SK-N-SH (cell line): ENCODE measurements at regions of chr7 and their contacts with region 1.

Region 1: GRCh38 chr7:44565097-44565794 is 8.5 kb downstream of the DDX56 start:
- DNase-seq: peak; percentile 80
- H3K4me3 ChIP-seq: no peak overlapping the region; a peak in 1 of 4 replicates
- H3K27ac ChIP-seq: no peak overlapping the region
- H3K4me1 ChIP-seq: peaks cover 4 to 5% of the 10 kb centered on the region in 2 experiments; a peak in 2 of 4 replicates
- H3K27me3 ChIP-seq: no peaks in the 10 kb centered on the region
- CTCF ChIP-seq: peak; percentile 99
- EP300 ChIP-seq: no peak
- RAD21 ChIP-seq: peak; percentile 78

Region 2: GRCh38 chr7:44218418-44219201 is 346.6 kb before region 1 on chr7:
- CTCF ChIA-PET with region 1: interaction called, 10 read pairs
- POLR2A ChIA-PET with region 1: no interaction called
- DNase-seq: peak; percentile 81
- H3K4me3 ChIP-seq: no peak overlapping the region
- H3K27ac ChIP-seq: peak overlapping the region in 1 of 2 experiments; percentile 77; a peak in 2 of 4 replicates
- H3K4me1 ChIP-seq: peaks cover 0 to 42% of the 10 kb centered on the region in 2 experiments; a peak in 1 of 4 replicates
- H3K27me3 ChIP-seq: no peaks in the 10 kb centered on the region
- CTCF ChIP-seq: no peak
- EP300 ChIP-seq: no peak
- RAD21 ChIP-seq: no peak

Region 3: DNA sequence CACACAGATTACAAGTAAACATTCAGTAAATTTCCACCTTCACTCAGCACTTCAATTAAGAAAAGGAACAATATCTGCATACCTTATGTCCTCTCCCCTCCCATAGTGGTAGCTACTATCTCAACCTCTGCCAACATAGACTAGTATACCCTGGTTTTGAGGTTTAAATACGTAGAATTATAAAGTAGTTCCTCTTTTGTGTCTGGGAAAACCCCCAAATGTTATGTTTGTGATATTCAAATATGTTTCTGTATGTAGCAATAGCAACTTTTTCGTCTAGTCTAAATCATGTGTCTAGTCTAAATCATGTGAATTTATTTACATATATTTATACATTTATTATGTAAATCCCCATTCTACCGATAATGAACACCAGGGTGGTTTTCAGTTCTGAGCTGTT is 226.6 kb before region 1 on chr7:
- CTCF ChIA-PET with region 1: no interaction called
- POLR2A ChIA-PET with region 1: no interaction called
- DNase-seq: no peak
- H3K4me3 ChIP-seq: no peak overlapping the region
- H3K27ac ChIP-seq: no peak overlapping the region
- H3K4me1 ChIP-seq: peaks cover 0 to 7% of the 10 kb centered on the region in 2 experiments; a peak in 1 of 4 replicates
- H3K27me3 ChIP-seq: 0 out of 2 replicates have a peak, but pooled peaks cover 13% of the 10 kb centered on the region
- CTCF ChIP-seq: no peak
- EP300 ChIP-seq: no peak
- RAD21 ChIP-seq: no peak

Region 4: DNA sequence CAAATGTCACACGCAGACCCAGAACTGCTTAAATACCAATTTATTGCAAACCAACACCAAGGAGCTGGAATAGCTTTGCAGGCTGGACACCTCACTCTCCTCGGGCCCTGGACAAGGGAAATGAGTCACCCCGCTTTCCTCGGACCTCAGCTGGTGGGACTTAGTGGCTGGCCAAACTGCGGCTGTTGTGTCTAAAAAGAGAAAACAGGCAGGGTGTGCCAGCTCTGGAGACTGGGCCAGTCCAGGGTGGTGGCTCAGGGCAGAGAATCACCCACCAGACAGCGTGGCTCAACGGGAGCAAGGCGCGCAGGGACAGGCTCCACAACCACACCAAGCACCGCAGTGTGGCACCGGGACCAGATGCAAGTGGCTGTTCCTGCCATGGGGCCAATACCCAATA is 181.7 kb before region 1 on chr7:
- CTCF ChIA-PET with region 1: no interaction called
- POLR2A ChIA-PET with region 1: no interaction called
- DNase-seq: no peak
- H3K4me3 ChIP-seq: no peak overlapping the region
- H3K27ac ChIP-seq: peak overlapping the region in 1 of 2 experiments; percentile 52; a peak in 2 of 4 replicates
- H3K4me1 ChIP-seq: peaks cover 0 to 18% of the 10 kb centered on the region in 2 experiments; a peak in 2 of 4 replicates
- H3K27me3 ChIP-seq: no peaks in the 10 kb centered on the region
- CTCF ChIP-seq: no peak
- EP300 ChIP-seq: no peak
- RAD21 ChIP-seq: no peak

Region 5: GRCh38 chr7:44490351-44491200 is 74.7 kb before region 1 on chr7 and contains the start of gene NUDCD3:
- CTCF ChIA-PET with region 1: interaction called, 27 read pairs
- POLR2A ChIA-PET with region 1: interaction called, 12 read pairs
- DNase-seq: peak; percentile 97
- H3K4me3 ChIP-seq: peak within 1 kb of the TSS; percentile 96 to 98
- H3K27ac ChIP-seq: peak within 1 kb of the TSS; percentile 98 to 99
- H3K4me1 ChIP-seq: peaks cover 10 to 22% of the 10 kb centered on the region in 2 experiments; a peak in 3 of 4 replicates
- H3K27me3 ChIP-seq: no peaks in the 10 kb centered on the region
- CTCF ChIP-seq: peak; percentile 47
- EP300 ChIP-seq: peak in 1 of 2 experiments; percentile 3; a peak in 1 of 4 replicates
- RAD21 ChIP-seq: no peak
- polyA plus RNA-seq, gene NUDCD3: 66.0 and 83.1 TPM in 2 replicates

Region 6: DNA sequence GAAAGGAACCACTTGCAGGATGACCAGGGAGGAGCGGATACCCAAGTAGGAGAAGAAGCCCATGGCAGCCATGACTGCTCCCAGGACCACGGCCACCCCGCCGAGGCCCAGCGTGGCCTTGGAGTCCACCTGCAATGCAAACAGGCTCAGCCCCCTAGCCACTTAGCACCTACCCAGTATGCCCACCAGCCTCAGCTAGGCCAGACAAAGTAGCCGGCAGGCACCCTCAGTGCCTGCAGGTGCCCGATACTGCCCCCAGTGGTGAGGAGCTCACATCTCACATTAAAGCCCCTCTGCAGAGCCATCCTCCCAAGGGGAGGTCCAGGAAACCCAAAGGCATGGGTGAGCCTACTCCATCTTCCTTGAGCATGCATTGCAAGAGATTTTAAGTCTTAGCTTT is 30.7 kb before region 1 on chr7:
- CTCF ChIA-PET with region 1: interaction called, 34 read pairs
- POLR2A ChIA-PET with region 1: no interaction called
- DNase-seq: peak; percentile 89
- H3K4me3 ChIP-seq: no peak overlapping the region
- H3K27ac ChIP-seq: no peak overlapping the region
- H3K4me1 ChIP-seq: no peaks in the 10 kb centered on the region
- H3K27me3 ChIP-seq: no peaks in the 10 kb centered on the region
- CTCF ChIP-seq: peak; percentile 73
- EP300 ChIP-seq: no peak
- RAD21 ChIP-seq: peak; percentile 41

Region 7: DNA sequence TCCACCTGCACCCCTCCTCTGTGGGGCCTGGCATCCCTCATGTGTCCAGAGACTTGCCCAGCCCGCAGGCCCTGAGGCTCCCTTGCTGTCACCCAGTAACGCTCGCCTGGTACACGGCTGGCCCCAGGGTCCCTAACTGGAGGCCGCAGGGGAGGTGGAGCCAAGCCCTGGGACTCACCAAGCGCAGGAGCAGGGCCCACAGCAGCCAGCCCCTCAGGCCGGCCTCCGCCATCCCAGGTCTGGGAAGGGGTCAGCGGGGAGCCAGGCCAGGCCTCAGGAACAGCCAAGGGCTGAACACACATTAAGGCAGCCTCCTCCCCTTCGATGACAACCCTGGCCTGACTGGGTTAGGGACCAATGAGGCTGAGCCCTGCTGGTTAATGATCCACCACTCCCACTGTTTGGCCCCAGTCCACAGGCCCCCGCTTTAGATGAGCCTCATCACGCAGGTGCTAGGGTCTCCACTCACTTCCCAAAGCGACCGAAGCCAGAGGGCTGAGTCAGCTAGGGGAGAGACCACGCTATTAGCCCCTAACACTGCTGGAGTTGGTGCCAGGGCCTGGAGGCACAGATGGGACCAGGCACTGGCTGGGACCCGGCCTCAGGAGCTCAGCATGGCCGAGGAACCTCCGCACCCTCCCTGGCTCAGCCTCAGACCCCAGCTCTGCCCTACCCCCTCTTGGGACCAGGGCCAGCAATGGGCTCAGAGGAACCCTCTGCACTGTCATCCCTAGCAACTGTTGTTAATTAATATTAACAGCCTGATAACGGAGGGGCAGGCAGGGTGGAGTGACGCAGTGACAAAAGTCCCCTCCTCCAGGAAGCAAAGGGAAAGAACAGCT is 24.0 kb before region 1 on chr7 and contains the start of gene NPC1L1:
- CTCF ChIA-PET with region 1: interaction called, 55 read pairs
- POLR2A ChIA-PET with region 1: interaction called, 3 read pairs
- DNase-seq: peak; percentile 62
- H3K4me3 ChIP-seq: no peak within 1 kb of the TSS
- H3K27ac ChIP-seq: no peak within 1 kb of the TSS; a peak in 1 of 4 replicates
- H3K4me1 ChIP-seq: peaks cover 0 to 16% of the 10 kb centered on the region in 2 experiments; a peak in 1 of 4 replicates
- H3K27me3 ChIP-seq: no peaks in the 10 kb centered on the region
- CTCF ChIP-seq: no peak
- EP300 ChIP-seq: no peak
- RAD21 ChIP-seq: no peak
- polyA plus RNA-seq, gene NPC1L1: 0.03 TPM in 1 of 2 replicates, not detected in the other

Region 8: DNA sequence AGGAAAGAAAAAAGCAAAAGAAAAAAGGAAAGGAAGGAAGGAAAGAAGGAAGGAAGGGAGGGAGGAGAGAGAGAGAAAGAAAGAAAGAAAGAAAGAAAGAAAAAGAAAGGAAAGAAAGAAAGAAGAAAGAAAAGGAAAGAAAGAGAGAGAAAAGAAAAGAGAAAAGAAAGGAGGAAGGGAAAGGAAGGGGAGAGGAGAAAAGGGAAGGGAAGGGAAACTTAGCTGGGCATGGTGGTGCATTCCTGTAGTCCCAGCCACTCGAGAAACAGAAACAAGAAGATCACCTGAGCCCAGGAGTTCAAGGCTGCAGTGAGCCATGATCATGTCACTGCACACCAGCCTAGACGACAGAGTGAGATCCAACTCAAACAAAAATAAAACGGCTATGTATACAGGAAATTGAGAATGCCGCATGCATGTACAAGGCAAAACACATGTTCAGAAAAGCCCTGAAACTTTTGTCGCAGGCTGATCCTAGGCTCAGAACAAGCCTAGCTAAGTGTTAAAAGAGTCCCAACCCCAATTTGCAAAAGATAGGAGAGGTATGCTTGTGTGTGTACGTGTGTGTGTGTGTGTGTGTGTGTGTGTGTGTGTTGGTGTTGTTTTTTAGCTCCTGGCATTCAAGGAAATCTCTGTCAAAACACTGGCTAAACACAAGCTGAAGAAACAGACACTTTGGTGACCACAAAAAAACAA is 17.6 kb before region 1 on chr7:
- CTCF ChIA-PET with region 1: interaction called, 55 read pairs
- POLR2A ChIA-PET with region 1: interaction called, 5 read pairs
- DNase-seq: no peak
- H3K4me3 ChIP-seq: no peak overlapping the region
- H3K27ac ChIP-seq: no peak overlapping the region
- H3K4me1 ChIP-seq: no peaks in the 10 kb centered on the region
- H3K27me3 ChIP-seq: 0 out of 2 replicates have a peak, but pooled peaks cover 8% of the 10 kb centered on the region
- CTCF ChIP-seq: no peak
- EP300 ChIP-seq: no peak
- RAD21 ChIP-seq: no peak

Region 9: DNA sequence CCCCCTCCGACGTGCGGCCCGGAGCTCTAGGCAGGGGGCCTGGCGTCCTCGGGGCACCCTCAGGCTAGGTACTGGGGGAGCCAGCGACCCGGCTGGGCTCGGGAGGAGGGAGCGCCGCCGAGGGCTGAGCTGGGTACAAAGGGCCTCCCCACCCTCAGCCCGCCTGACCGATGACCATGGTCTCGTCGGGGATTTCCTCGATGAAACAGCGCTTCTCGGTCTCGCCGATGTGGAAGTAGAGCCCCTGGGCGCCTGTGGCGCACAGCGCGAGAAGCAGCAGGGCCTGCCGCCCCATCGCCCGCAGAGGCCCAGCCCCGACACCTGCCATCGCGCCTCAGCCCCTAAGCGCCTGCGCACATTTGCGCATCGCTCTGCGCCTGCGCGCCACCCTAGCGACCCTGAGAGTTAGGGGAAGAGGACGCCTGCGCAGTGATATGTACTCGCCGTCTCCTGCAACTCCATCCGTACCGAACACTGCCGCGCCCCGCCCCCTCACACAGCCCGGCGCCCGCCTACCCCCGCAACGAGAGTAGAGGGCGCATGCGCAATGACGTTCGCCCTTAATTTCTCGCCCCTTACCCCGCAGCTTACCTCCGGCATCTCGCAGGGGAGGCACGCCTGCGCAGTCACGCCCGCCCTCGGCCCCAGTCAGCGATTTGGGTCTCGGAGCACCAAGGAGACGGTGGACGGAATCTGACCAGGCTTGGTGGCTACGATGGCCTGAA is 16.8 kb after region 1 on chr7 and contains the start of gene TMED4:
- CTCF ChIA-PET with region 1: interaction called, 98 read pairs
- POLR2A ChIA-PET with region 1: interaction called, 5 read pairs
- DNase-seq: peak; percentile 100
- H3K4me3 ChIP-seq: peak within 1 kb of the TSS; percentile 82 to 95
- H3K27ac ChIP-seq: peak within 1 kb of the TSS; percentile 90 to 94
- H3K4me1 ChIP-seq: peaks cover 5 to 15% of the 10 kb centered on the region in 2 experiments; a peak in 2 of 4 replicates
- H3K27me3 ChIP-seq: no peaks in the 10 kb centered on the region
- CTCF ChIP-seq: no peak
- EP300 ChIP-seq: no peak
- RAD21 ChIP-seq: no peak
- polyA plus RNA-seq, gene TMED4: 145 and 192 TPM in 2 replicates